ENCODE measurements at regions of chr6 and their contacts with region 1.

Region 1: DNA sequence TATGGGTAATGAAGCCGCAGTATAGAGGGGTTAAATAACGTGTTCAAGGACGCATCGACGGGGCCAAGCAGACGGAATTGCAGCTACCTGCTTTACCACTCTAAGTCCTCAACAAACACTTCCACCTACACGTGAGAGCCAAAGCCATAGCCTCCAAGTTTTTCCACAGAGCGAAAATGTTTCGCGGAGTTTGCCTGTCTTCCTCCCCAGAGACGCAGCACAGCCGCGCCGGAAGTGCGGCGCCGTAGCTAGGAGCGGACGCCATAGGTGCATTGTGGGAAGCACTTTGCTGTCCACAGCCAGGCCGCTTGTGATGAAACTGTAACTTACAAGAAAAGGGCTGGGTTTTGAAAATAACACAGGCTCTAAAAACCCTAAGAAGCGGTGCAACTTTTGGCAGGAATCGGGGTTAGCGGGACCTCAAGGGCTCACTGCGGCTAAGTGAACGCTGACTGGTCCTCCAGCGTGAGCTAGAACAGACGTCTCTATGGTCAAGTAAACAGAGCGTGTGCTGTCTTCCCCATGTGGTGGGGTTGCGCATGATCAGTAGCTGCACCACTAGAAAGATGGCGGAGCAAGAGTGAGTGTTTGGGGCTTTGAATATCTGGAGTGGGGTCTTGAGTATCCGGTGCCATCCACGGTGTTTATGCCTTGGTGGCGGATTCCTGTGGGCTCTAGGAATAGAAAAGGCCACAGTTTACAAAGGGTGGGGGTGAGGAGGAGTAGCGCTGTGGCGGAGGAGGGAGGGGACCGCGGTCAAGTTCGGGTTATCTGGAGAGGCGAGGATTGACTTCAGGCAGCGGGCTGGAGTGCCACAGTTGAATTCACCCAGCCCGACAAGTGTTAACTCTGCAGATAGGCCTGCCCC is at the start of gene RPL7L1:
- DNase-seq: peak; percentile 80 to 90
- ATAC-seq: peak; percentile 94 to 95 (median 95)
- H3K4me3 ChIP-seq: peak within 1 kb of the TSS; percentile 74
- H3K27ac ChIP-seq: peak within 1 kb of the TSS; percentile 96
- H3K4me1 ChIP-seq: peaks cover 31% of the 10 kb centered on the region
- H3K27me3 ChIP-seq: no peaks in the 10 kb centered on the region
- CTCF ChIP-seq: peak; percentile 12
- total RNA-seq, gene RPL7L1: 50.7 to 70.4 (median 62.9) TPM

Region 2: DNA sequence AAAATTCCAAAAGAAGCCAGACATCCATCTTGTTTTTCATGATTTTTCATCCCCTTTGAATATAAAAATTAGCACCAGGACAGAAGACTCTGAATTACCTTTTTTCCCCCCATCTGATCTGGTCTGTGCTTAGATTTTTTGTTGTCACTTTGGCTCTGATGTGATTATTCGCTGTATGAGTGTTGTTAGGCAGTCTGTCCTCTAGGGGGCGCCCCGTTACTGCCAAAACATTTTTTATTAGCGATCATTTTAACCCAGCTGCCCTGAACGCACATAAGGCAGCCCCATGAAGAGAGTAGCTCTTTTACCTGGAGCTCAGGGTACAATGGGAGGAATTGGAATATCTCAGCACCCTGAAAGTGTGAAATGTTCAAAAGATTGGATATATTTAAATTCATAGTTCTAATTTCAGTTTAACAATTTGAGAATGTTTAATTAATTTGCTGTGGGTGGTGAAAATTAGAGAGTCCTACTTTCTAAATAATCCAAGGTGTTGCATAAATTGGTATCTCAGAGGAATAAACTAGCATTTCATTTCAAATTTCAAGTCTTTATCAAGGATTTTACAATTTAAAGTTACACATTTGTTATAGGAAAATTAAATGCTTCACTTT is 218.0 kb before region 1 on chr6:
- intact Hi-C with region 1: loop called (anchors 2 to 5 kb)
- DNase-seq: peak; percentile 75 to 87
- ATAC-seq: peak; percentile 85 to 94 (median 92)
- H3K4me3 ChIP-seq: no peak overlapping the region
- H3K27ac ChIP-seq: no peak overlapping the region
- H3K4me1 ChIP-seq: no peaks in the 10 kb centered on the region
- H3K27me3 ChIP-seq: no peaks in the 10 kb centered on the region
- CTCF ChIP-seq: peak; percentile 91

Region 3: GRCh38 chr6:42726485-42727086 is 153.0 kb before region 1 on chr6:
- intact Hi-C with region 1: loop called (anchors 5 to 10 kb)
- DNase-seq: peak; percentile 63 to 80
- ATAC-seq: peak; percentile 93 to 97 (median 96)
- H3K4me3 ChIP-seq: peak overlapping the region; percentile 75
- H3K27ac ChIP-seq: peak overlapping the region; percentile 58
- H3K4me1 ChIP-seq: peaks cover 7% of the 10 kb centered on the region
- H3K27me3 ChIP-seq: no peaks in the 10 kb centered on the region
- CTCF ChIP-seq: peak; percentile 95

Region 4: GRCh38 chr6:42745707-42746462 is 133.7 kb before region 1 on chr6 and contains the start of gene TBCC:
- intact Hi-C with region 1: loop called in 1 of 2 experiments (anchors 2 kb)
- DNase-seq: peak; percentile 95 to 97
- ATAC-seq: peak; percentile 86 to 91 (median 87)
- H3K4me3 ChIP-seq: peak within 1 kb of the TSS; percentile 97
- H3K27ac ChIP-seq: peak within 1 kb of the TSS; percentile 99
- H3K4me1 ChIP-seq: peaks cover 33% of the 10 kb centered on the region
- H3K27me3 ChIP-seq: no peaks in the 10 kb centered on the region
- CTCF ChIP-seq: no peak
- total RNA-seq, gene TBCC: 17.0 to 26.9 (median 18.9) TPM

Region 5: DNA sequence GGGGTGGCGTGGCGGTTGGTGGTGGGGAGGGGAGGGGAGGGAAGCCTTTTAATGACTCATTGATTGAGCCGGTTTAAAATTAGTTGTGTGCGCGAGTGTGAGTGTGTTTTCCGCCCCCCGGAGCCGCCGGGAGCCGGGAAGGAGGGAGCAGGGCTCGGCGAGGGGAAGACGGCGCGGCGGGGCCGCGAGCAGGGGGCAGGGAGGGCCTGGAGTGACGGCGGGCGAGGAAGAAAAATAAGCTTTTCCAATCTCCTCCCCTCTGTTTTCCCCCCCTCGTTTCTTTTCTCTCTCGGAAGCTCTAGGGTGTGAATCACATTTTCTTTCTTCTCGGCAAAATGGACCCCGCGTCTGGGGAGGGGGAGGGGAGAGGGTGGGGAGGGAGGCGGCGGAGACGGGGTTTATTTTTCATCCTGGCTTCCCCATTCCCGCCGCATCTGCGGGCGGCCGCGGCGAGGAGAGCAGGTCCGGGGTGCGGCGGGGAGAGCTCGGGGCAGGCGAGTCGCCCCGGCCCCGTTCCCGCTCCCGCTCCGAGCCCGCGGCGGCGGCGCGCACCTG is 96.9 kb before region 1 on chr6:
- intact Hi-C with region 1: loop called in 1 of 2 experiments (anchors 5 kb)
- DNase-seq: peak; percentile 80 to 92
- ATAC-seq: peak; percentile 74 to 77 (median 76)
- H3K4me3 ChIP-seq: peak overlapping the region; percentile 90
- H3K27ac ChIP-seq: peak overlapping the region; percentile 100
- H3K4me1 ChIP-seq: peaks cover 24% of the 10 kb centered on the region
- H3K27me3 ChIP-seq: no peaks in the 10 kb centered on the region
- CTCF ChIP-seq: no peak

Region 6: GRCh38 chr6:42901536-42901957 is 21.9 kb after region 1 on chr6:
- intact Hi-C with region 1: loop called in 1 of 2 experiments (anchors 2 kb)
- DNase-seq: peak; percentile 70 to 85
- ATAC-seq: peak; percentile 97 to 99 (median 98)
- H3K4me3 ChIP-seq: no peak overlapping the region
- H3K27ac ChIP-seq: no peak overlapping the region
- H3K4me1 ChIP-seq: no peaks in the 10 kb centered on the region
- H3K27me3 ChIP-seq: no peaks in the 10 kb centered on the region
- CTCF ChIP-seq: peak; percentile 91

Measured in psoas muscle (tissue), 8 donors.